Upper lobe of right lung (tissue), 1 donor: ENCODE measurements at regions of chr3 and their contacts with region 1.

Region 1: GRCh38 chr3:40179016-40179415 is 130.5 kb upstream of the EIF1B start:
- DNase-seq: peak; percentile 74
- ATAC-seq: peak; percentile 77
- H3K4me3 ChIP-seq: no peak overlapping the region
- H3K27ac ChIP-seq: no peak overlapping the region
- H3K4me1 ChIP-seq: no peaks in the 10 kb centered on the region
- H3K27me3 ChIP-seq: no peaks in the 10 kb centered on the region
- CTCF ChIP-seq: peak; percentile 75

Region 2: GRCh38 chr3:39707314-39707909 is 471.6 kb before region 1 on chr3:
- intact Hi-C with region 1: loop called (anchors 10 kb)
- DNase-seq: no peak
- ATAC-seq: peak; percentile 73
- H3K4me3 ChIP-seq: no peak overlapping the region
- H3K27ac ChIP-seq: no peak overlapping the region
- H3K4me1 ChIP-seq: no peaks in the 10 kb centered on the region
- H3K27me3 ChIP-seq: no peaks in the 10 kb centered on the region
- CTCF ChIP-seq: peak; percentile 70

Region 3: DNA sequence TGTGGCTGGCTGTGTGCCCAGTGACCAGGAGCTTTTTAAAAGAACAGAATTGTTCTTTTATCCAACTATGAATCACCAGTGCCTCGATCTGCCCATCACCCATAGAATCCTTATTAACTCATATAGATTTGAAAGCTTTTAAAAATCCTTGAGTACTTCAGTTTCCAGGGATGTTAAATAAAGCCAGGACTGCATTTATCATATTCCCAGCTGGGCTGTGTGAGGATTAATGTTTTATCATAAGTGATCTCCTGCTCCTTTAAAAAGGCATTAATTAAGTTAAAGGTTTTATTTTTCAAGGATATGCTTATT is 135.6 kb before region 1 on chr3:
- intact Hi-C with region 1: no loop called
- DNase-seq: no peak
- ATAC-seq: no peak
- H3K4me3 ChIP-seq: no peak overlapping the region
- H3K27ac ChIP-seq: no peak overlapping the region
- H3K4me1 ChIP-seq: no peaks in the 10 kb centered on the region
- H3K27me3 ChIP-seq: no peaks in the 10 kb centered on the region
- CTCF ChIP-seq: no peak

Region 4: GRCh38 chr3:40237889-40238571 is 59.0 kb after region 1 on chr3:
- intact Hi-C with region 1: no loop called
- DNase-seq: no peak
- ATAC-seq: no peak
- H3K4me3 ChIP-seq: no peak overlapping the region
- H3K27ac ChIP-seq: no peak overlapping the region
- H3K4me1 ChIP-seq: no peaks in the 10 kb centered on the region
- H3K27me3 ChIP-seq: no peaks in the 10 kb centered on the region
- CTCF ChIP-seq: no peak

Region 5: DNA sequence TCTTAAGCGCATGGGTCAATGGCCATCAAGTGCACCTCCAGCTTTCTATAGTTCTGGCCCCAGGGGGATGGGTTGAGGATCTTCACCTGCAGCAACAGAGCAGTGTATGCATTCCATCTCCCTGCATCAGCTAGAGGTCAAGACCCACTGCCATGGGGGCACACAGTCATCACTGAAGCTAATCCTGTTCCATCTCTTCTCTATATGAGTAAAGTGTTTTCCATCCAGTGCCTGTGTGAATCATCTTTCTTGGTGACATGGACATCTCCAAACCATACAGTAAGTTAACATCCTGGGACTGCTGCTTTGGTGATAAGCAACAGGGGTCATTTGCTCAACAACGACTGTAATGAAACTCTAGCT is 203.6 kb after region 1 on chr3:
- intact Hi-C with region 1: no loop called
- DNase-seq: no peak
- ATAC-seq: no peak
- H3K4me3 ChIP-seq: no peak overlapping the region
- H3K27ac ChIP-seq: no peak overlapping the region
- H3K4me1 ChIP-seq: no peaks in the 10 kb centered on the region
- H3K27me3 ChIP-seq: peaks cover 9% of the 10 kb centered on the region
- CTCF ChIP-seq: no peak